Aorta (tissue), 5 donors: ENCODE measurements at regions of chr2 and their contacts with region 1.

Region 1: DNA sequence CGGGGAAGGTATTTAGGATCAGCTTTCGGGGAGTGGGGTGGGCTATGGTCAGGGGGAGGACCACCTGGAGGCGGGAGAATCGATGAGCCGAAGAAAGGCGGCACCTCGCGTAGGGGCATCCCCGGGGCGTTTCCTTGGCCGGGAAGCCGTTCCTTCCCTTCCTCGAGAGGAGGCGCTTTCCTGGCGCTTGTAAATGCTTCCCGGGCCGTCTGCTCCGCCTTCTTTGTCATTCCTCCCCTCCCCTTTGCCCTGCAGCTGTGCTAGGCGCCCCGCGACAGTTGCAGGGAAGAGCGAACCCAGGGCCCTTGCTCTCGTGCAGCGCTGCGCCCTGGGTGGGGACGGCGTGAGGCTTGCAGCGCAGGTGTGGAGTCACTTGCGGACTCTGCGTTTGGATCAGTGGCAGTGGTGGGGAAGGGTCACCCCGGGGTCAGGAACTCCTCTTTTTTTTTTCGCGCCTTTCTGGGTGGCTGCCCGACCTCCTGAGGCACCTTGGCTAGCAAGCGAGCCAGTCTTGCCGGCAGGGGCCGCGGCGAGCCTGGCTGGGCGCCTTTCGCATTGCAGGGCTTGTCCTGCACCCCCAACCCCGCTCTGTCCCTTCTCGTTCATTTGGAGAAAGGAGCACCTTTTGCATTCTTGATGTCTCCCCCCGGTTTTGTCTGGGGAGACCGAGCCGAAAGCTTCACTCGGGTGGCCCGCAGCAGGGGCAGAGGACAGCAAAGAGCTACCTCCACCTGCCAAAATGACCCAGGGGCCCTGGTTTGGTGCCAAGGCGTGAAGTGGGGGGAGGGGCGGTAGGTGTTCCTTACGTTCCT is 840 bp downstream of the KCNS3 start:
- DNase-seq: peak; percentile 78 to 88
- ATAC-seq: peak; percentile 78
- H3K4me3 ChIP-seq: peak overlapping the region; percentile 51 to 81
- H3K27ac ChIP-seq: peak overlapping the region in 1 of 2 donors; percentile 55
- H3K4me1 ChIP-seq: no peaks in the 10 kb centered on the region
- H3K27me3 ChIP-seq: no peaks in the 10 kb centered on the region

Region 2: DNA sequence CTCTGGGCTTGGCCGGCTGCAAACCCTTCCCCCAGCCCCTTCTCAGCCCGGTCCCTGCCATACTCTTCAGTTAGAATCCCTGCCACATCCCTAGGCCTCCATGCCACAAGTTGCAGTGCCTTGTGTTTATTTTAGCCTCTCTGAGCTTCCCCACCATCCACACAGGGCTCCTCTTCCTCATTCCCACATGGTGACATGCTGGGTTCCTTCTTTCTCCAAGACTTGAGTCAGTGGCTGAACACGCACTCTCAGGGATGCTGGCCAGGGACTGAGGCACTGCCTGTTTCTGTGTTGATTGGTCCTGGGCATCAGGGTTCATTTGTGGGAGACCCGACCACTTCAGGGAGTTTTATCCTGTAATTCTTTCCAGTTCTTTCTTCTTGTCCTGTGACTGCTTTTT is 55.4 kb after region 1 on chr2:
- intact Hi-C with region 1: loop called in 1 of 2 experiments (anchors 5 kb)
- DNase-seq: peak; percentile 81 to 85
- ATAC-seq: peak; percentile 85
- H3K4me3 ChIP-seq: peak overlapping the region in 1 of 2 donors; percentile 5
- H3K27ac ChIP-seq: peak overlapping the region; percentile 88 to 89
- H3K4me1 ChIP-seq: peaks cover 5 to 7% of the 10 kb centered on the region in 2 donors
- H3K27me3 ChIP-seq: no peaks in the 10 kb centered on the region

Region 3: DNA sequence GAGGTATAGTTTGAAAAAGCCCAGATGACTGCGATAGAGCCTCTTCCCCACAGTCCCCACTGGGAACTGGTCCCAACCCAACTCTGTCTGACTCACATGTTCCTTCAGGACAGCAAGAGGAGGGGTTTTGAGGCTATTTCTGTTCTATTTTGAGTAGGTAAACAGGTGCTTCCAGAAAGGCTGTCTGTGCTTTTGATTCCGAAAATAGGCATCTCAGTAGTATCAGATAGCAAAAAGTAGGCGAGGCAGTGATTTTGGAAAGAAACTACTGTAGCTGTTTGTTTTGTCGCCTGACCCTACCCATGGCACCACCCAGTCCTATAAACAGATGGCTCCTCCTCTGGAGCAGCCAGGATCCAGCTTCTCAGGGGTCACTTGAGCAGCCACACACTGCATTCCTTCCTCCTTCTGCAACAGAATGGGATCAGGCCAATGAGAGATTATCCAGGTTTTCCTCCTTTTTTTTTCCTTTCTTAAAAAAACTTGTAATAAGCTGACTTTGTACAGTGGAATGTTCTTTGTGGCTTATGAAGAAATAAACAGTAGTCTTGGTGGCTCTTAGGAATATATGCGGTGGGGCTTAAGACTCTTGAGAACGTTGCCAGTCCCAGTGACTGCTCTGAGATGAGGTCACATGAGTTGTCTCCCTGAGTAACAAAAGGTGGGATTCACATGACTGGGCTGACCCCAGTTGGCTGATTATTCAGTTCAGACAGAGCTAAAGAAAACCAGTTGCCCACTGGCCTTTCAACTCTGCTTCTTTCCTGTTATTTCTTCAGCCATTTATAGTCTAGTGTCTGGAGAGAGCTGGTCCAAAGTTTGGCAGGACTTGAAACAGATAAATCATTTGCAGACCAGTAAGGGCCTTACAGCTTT is 97.8 kb after region 1 on chr2:
- intact Hi-C with region 1: loop called in 1 of 2 experiments (anchors 2 kb)
- DNase-seq: peak in 1 of 2 donors; percentile 69
- ATAC-seq: peak; percentile 91
- H3K4me3 ChIP-seq: no peak overlapping the region
- H3K27ac ChIP-seq: peak overlapping the region; percentile 89 to 97
- H3K4me1 ChIP-seq: peaks cover 0 to 6% of the 10 kb centered on the region in 2 donors
- H3K27me3 ChIP-seq: no peaks in the 10 kb centered on the region